ENCODE measurements at regions of chr17 and their contacts with region 1.

Region 1: GRCh38 chr17:65055348-65056261 is 935 bp downstream of the GNA13 start:
- DNase-seq: peak; percentile 42
- H3K4me3 ChIP-seq: peak overlapping the region; percentile 61
- H3K27ac ChIP-seq: peak overlapping the region; percentile 95
- H3K4me1 ChIP-seq: peaks cover 10% of the 10 kb centered on the region
- H3K27me3 ChIP-seq: no peaks in the 10 kb centered on the region
- CTCF ChIP-seq: no peak

Region 2: DNA sequence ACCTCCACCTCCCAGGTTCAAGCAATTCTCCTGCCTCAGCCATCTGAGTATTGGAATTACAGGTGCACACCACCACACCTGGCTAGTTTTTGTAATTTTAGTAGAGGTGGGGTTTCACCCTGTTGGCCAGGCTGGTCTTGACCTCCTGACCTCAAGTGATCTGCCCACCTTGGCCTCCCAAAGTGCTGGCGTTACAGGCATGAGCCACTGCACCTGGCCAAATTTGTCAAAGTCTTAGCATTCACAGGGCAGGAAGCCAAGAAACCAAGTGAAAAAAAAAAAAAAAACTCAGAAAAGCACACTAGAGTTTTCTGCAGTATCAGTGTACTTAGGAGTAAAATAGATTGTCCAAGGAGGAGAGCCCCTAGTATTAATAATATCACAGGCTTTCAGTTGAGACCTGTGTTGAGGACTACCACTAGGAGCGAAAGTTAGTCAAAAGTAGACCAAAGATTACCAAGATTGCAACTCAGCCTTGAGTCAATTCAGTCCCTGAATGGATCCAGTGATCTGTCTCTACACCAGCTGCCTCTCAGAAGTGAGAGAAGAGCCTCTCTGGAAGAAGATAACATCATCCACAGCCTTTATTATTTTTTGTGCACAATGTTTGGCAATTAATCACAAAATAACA is 976.6 kb after region 1 on chr17:
- CTCF ChIA-PET with region 1: no interaction called
- POLR2A ChIA-PET with region 1: interaction called, 15 read pairs
- intact Hi-C with region 1: no loop called
- DNase-seq: no peak
- H3K4me3 ChIP-seq: no peak overlapping the region
- H3K27ac ChIP-seq: no peak overlapping the region
- H3K4me1 ChIP-seq: no peaks in the 10 kb centered on the region
- H3K27me3 ChIP-seq: no peaks in the 10 kb centered on the region
- CTCF ChIP-seq: no peak